ENCODE measurements at regions of chr11 and their contacts with region 1.

Region 1: DNA sequence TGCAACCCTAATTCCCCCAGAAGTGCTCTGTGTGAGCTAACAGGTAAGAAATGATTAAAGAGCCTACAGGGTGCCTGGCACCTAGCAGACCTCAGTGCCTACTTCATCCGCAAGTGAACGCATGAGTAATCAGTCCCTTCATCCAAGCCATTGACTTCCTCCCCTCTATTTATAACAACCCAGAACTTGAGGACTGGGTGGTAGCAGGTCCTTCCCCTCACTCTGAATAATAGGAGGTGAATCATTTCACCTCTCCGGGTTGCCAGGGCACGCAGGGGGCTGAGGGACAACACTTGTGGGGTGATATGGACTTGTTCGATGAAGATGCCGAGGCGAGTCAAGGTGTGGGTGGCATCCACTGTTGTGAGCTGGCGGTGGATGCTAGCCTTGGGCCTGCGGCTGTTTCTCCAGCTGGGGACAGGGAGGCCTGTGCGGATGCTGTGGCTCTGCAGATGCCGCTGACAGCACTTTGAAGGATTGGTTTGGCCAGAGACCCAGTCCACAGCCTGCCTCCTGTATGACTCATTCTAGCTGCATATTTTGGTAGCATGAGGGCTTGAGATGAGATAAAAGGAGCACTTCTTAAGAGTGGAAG is 11.7 kb upstream of the SORL1-AS1 start:
- DNase-seq: peak in 1 of 2 donors; percentile 82
- H3K4me3 ChIP-seq: no peak overlapping the region
- H3K27ac ChIP-seq: peak overlapping the region; percentile 77 to 78
- H3K4me1 ChIP-seq: peaks cover 13 to 31% of the 10 kb centered on the region in 2 donors
- H3K27me3 ChIP-seq: no peaks in the 10 kb centered on the region
- CTCF ChIP-seq: no peak

Region 2: DNA sequence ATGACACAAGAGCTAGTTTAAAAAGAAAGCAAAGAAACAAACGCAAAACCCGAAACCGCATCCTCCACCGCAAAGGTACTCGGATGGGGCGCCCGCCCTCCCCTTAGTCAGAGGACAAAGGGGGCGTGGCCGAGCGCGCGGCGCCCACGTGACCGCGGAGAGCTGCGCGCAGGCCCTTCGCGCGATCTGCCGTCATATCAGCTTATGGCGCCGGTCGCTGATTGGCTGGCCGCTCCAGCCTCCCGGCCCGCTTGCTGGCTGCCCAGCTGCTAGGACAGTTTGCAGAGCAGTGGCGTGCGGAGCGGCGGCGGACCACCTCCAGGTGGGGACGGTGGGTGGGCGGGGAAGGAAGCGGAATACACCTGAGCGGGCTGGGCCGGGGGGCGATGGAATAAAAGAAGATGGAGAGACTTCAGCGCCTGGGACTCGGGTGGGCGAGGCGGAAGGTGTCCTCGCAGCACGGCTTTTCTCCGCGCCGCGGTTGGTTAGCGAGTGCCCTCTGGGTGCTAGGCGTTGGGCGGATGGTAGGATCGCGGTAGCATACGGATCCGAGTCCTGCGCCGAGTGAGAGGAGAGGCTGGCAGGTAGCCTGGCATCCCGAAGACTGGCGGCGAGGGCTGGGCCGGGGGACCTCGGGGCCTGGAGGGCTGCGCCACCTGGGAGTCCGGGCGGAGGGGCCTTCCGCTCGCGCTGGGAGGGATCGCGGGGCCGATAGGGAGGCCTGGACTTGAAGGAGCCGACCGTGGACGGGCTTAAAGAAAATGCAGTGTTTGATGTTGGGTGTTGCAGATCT is 171.8 kb before region 1 on chr11 and contains the start of gene SC5D:
- intact Hi-C with region 1: loop called (anchors 5 kb)
- DNase-seq: peak; percentile 89 to 97
- H3K4me3 ChIP-seq: peak within 1 kb of the TSS; percentile 61 to 90
- H3K27ac ChIP-seq: peak within 1 kb of the TSS; percentile 76 to 91
- H3K4me1 ChIP-seq: peaks cover 0 to 7% of the 10 kb centered on the region in 2 donors
- H3K27me3 ChIP-seq: no peaks in the 10 kb centered on the region
- CTCF ChIP-seq: no peak
- total RNA-seq, gene SC5D: 18.8 TPM

Region 3: DNA sequence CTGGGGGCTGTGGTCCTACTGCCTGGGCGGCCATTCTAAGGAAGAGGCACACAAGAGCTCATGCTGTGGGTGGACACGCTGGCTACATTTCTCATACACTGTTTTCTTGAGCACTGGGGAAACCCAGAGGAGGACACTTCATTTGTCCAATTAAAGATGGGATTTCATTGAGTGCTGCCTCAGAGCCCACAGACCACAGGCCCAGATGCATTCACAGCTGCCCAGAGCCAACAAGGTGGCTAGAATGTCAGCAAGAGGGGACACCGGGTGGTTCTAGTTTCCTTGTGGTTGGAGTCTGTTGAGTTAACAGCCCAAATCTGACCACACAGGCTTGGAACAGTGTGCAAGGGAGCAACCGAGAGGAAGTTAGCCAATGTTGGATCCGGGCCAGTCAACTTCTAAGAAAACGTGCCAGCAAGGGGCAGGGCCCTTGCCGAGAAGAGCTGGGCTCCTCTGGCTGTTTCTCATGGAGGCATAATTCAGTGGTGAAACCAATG is 47.3 kb before region 1 on chr11:
- intact Hi-C with region 1: loop called (anchors 5 kb)
- DNase-seq: peak; percentile 58 to 95
- H3K4me3 ChIP-seq: no peak overlapping the region
- H3K27ac ChIP-seq: peak overlapping the region; percentile 39 to 47
- H3K4me1 ChIP-seq: peaks cover 0 to 10% of the 10 kb centered on the region in 2 donors
- H3K27me3 ChIP-seq: no peaks in the 10 kb centered on the region
- CTCF ChIP-seq: no peak

Region 4: DNA sequence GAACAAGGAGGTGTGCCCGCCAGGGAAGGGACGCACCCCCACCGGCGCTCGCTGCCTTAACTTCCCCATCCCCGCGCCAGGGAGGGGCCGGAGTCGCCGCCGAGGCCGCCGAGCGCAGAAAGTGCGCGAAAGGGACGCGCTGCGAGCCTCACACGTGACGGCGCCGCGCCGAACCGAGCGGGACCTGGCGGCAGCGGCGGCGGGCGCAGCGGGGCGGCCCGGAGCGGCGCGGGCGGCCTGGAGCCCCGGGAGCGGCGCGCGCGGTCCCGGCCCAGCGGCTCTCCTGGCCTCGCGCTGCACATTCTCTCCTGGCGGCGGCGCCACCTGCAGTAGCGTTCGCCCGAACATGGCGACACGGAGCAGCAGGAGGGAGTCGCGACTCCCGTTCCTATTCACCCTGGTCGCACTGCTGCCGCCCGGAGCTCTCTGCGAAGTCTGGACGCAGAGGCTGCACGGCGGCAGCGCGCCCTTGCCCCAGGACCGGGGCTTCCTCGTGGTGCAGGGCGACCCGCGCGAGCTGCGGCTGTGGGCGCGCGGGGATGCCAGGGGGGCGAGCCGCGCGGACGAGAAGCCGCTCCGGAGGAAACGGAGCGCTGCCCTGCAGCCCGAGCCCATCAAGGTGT is 12.4 kb before region 1 on chr11 and contains the start of gene SORL1:
- intact Hi-C with region 1: loop called (anchors 1 kb)
- DNase-seq: peak in 1 of 2 donors; percentile 86
- H3K4me3 ChIP-seq: peak within 1 kb of the TSS; percentile 74 to 88
- H3K27ac ChIP-seq: peak within 1 kb of the TSS in 1 of 2 donors; percentile 32
- H3K4me1 ChIP-seq: peaks cover 0 to 9% of the 10 kb centered on the region in 2 donors
- H3K27me3 ChIP-seq: no peaks in the 10 kb centered on the region
- CTCF ChIP-seq: peak; percentile 58 to 77 (median 73)
- total RNA-seq, gene SORL1: 10.5 TPM

Region 5: GRCh38 chr11:121497176-121497998 is 32.9 kb after region 1 on chr11:
- intact Hi-C with region 1: no loop called
- DNase-seq: no peak
- H3K4me3 ChIP-seq: no peak overlapping the region
- H3K27ac ChIP-seq: no peak overlapping the region
- H3K4me1 ChIP-seq: no peaks in the 10 kb centered on the region
- H3K27me3 ChIP-seq: no peaks in the 10 kb centered on the region
- CTCF ChIP-seq: no peak

Region 6: GRCh38 chr11:121520243-121521144 is 56.0 kb after region 1 on chr11:
- intact Hi-C with region 1: loop called (anchors 2 kb)
- DNase-seq: no peak
- H3K4me3 ChIP-seq: no peak overlapping the region
- H3K27ac ChIP-seq: peak overlapping the region; percentile 76 to 80
- H3K4me1 ChIP-seq: peaks cover 4 to 23% of the 10 kb centered on the region in 2 donors
- H3K27me3 ChIP-seq: no peaks in the 10 kb centered on the region
- CTCF ChIP-seq: no peak

Region 7: DNA sequence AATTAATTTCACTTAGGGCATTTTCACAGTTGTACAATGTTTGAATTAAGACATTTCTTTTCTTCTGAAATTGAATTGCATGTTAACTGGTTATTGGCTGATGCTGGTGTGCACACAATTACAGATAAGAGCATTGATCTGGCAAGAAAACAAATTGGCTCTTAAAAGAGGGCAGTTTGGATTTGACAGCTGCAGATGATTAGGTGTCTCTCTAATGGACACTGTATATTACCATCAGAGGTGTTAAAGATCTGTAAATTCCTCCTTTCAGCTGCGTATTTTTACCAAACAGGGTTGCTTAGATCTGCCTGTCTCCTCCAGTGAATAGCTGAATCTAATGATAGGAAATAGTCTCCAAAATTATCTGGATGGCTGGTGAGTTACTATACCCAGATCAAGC is 453.0 kb after region 1 on chr11:
- intact Hi-C with region 1: no loop called
- DNase-seq: no peak
- H3K4me3 ChIP-seq: no peak overlapping the region
- H3K27ac ChIP-seq: no peak overlapping the region
- H3K4me1 ChIP-seq: no peaks in the 10 kb centered on the region
- H3K27me3 ChIP-seq: no peaks in the 10 kb centered on the region
- CTCF ChIP-seq: no peak

Measured in ascending aorta (tissue), 2 donors.